ENCODE measurements at regions of chr3 and their contacts with region 1.

Region 1: DNA sequence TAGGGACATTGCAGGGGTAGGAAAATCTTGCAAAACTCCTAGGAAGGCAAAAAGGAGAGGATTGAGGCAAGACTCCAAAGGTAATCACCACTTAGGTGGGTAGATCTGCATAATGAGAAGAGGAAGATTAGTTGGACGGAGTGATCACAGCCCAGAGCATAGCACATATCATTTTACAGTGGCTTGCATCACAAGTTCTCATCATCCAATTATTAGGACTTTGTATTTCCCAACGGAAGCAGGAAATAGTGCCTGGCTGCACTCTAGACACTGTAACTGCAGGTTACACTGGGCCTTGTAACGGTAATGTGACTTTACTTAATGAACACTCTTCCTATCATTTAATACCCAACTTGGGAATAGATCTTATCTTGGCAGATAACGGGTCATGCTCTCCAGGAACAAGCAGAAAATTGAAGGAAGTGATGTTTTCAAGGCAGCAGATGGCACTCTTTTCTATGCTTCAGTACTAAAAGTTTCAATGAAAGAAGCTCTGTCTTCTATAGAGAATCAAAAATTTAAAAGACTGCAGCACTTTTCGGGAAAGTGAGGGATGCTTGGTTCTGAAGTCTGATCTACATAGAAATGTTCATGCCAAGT is 101.9 kb upstream of the KCNMB2 start:
- DNase-seq: no peak
- ATAC-seq: no peak
- H3K4me3 ChIP-seq: no peak overlapping the region
- H3K27ac ChIP-seq: no peak overlapping the region
- H3K4me1 ChIP-seq: no peaks in the 10 kb centered on the region
- H3K27me3 ChIP-seq: no peaks in the 10 kb centered on the region
- CTCF ChIP-seq: peak; percentile 3

Region 2: DNA sequence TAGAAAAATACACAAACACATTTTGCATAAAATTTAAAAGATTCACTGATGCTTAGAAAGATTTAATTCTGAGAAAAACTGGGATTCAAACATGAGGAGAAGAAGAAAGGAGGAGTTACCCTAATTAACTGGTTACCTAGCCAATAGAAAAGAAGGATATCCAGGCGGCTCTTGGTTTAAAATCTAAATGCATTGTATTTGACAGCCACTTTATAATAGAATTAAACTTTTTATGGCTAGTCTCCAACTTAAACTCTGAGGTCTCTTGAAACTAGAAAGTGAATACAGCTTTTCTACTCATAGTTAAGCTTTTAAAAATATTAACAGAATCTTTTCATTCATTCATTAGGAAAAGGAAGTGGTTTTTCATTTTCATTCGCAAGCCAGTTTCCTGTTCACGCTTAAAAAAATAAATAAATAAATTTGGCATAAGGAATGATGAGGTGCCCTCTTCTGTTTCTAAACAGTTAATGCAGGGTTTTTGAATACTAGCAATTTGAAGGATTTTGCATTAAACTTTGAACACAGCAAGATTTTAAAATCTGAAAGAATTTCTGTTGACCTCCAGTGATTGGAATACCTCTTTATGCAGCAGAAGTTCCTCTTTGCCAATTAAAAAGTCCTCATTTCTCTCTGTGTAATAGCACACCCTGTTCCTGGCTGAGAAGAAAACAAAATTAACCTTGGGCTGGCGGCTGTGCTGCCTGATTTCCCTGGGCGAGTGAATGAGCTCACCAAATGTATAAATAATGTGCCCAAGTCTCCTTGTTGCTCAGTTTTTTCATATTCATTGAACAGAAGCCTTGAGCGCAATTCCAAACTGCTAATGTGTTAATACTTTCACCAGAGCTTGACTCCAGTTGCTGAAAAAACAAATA is 532.2 kb after region 1 on chr3:
- intact Hi-C with region 1: loop called in 1 of 2 experiments (anchors 5 kb)
- DNase-seq: no peak
- ATAC-seq: peak in 1 of 4 donors; percentile 66
- H3K4me3 ChIP-seq: peak overlapping the region; percentile 31
- H3K27ac ChIP-seq: no peak overlapping the region
- H3K4me1 ChIP-seq: peaks cover 4% of the 10 kb centered on the region
- H3K27me3 ChIP-seq: no peaks in the 10 kb centered on the region
- CTCF ChIP-seq: peak; percentile 52